Body of pancreas (tissue), 4 donors: ENCODE measurements at regions of chr6 and their contacts with region 1.

Region 1: DNA sequence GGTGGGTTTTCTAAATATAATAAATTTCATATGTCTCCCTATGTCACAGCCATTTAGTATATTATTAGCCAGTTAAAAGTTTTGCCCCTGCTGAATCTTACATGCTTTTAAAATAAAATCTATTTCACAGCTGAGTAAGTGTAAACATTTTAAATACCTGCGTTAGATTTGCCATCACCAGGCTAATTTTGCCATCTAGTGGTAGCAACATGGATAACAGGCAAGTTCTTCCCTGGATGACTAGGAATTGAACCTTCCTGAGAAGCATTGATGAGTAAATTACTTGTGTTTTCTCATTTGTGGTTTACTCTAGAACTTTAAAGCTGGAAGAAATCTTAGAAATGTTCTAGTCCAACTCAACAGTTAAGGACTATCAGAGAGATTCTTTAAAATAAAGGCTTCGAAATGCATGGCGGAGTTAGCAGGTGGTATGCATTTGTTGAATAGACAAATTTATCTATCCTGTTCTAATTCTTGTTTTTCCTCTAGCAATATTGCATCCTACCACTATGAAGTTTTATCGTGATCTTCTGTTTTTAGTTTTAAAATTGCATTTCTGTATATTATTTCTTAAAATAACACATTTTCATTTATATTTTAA is 2.6 kb downstream of the PRSS35 start:
- DNase-seq: peak; percentile 15 to 53 (median 33)
- ATAC-seq: peak; percentile 54
- H3K4me3 ChIP-seq: no peak overlapping the region
- H3K27ac ChIP-seq: no peak overlapping the region
- H3K4me1 ChIP-seq: peaks cover 11% of the 10 kb centered on the region
- H3K27me3 ChIP-seq: no peaks in the 10 kb centered on the region
- CTCF ChIP-seq: peak; percentile 33 to 89 (median 75)
- POLR2A ChIP-seq: no peak

Region 2: GRCh38 chr6:83221889-83222479 is 293.0 kb before region 1 on chr6:
- intact Hi-C with region 1: loop called (anchors 5 kb)
- DNase-seq: no peak
- ATAC-seq: peak; percentile 40
- H3K4me3 ChIP-seq: no peak overlapping the region
- H3K27ac ChIP-seq: no peak overlapping the region
- H3K4me1 ChIP-seq: no peaks in the 10 kb centered on the region
- H3K27me3 ChIP-seq: no peaks in the 10 kb centered on the region
- CTCF ChIP-seq: peak; percentile 35 to 63 (median 58)
- POLR2A ChIP-seq: no peak

Region 3: GRCh38 chr6:83381949-83382348 is 133.0 kb before region 1 on chr6:
- intact Hi-C with region 1: no loop called
- DNase-seq: no peak
- ATAC-seq: no peak
- H3K4me3 ChIP-seq: no peak overlapping the region
- H3K27ac ChIP-seq: no peak overlapping the region
- H3K4me1 ChIP-seq: no peaks in the 10 kb centered on the region
- H3K27me3 ChIP-seq: no peaks in the 10 kb centered on the region
- CTCF ChIP-seq: no peak
- POLR2A ChIP-seq: no peak

Region 4: DNA sequence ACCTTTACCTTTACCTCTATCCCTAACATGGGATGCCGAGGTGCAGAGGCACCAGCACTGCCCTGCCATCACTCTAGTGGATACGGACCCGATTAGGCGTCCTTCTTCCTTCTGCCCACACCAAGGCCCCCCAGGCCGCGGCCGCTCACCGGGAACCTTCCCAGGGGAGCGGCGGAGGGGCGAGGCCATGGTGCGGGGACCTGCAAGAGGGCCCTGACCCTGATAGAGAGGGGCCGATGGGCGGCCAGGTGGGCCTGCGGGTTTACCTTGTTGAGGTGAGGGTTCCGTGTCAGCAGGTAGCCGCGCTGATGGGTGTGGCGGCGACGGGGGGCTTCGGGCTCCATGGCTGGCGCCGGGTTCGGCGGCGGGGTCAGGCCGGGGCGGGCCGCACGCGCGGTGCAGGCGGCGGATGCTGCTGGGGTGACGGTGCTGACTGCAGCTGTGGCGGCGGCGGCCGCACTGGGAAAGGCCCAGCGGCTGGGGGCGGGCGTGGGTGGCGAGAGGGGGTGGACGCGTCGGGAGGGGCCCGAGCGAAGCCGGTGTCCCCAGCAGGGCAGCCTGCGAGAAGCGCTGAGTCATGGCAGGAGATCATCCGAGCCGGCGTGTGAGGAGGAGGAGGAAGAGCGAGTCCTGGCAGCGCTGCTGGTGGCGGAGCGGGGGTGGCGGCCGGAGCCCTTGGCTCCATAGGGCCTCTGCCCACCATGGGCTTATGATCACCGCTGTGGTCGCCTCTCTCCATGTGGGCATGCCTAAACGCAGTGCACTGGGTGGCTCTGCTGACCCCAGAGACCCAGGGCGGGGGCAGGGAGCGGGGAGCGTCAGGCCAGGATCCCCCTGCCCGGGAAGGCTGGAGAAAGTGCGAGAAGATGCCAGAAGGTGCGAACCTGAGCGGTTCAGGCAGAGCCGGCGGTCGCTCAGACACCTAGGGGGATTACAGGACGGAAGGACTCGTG is 84.1 kb before region 1 on chr6 and contains the start of gene ME1:
- intact Hi-C with region 1: no loop called
- DNase-seq: peak; percentile 75 to 83 (median 82)
- ATAC-seq: peak; percentile 90
- H3K4me3 ChIP-seq: peak within 1 kb of the TSS; percentile 34 to 44
- H3K27ac ChIP-seq: peak within 1 kb of the TSS; percentile 66 to 79 (median 70)
- H3K4me1 ChIP-seq: peaks cover 31% of the 10 kb centered on the region
- H3K27me3 ChIP-seq: no peaks in the 10 kb centered on the region
- CTCF ChIP-seq: no peak
- POLR2A ChIP-seq: peak; percentile 39 to 42 (median 41)
- total RNA-seq, gene ME1: 7.9 to 10.4 TPM

Region 5: GRCh38 chr6:83770910-83771309 is 255.9 kb after region 1 on chr6:
- intact Hi-C with region 1: no loop called
- DNase-seq: no peak
- ATAC-seq: no peak
- H3K4me3 ChIP-seq: no peak overlapping the region
- H3K27ac ChIP-seq: no peak overlapping the region
- H3K4me1 ChIP-seq: no peaks in the 10 kb centered on the region
- H3K27me3 ChIP-seq: no peaks in the 10 kb centered on the region
- CTCF ChIP-seq: no peak
- POLR2A ChIP-seq: no peak